Activated T-helper 1 cell treated with anti-CD3 and anti-CD28 coated beads, Interleukin-12 subunit alpha, Interleukin-12 subunit beta, Interleukin-2, Interleukin-4 antibody, amounts not matched to agents 30 ng/mL and 10 ng/mL and 1 ng/mL, durations not matched to agents 14 hours and 24 hours and 36 hours (primary cell): ENCODE measurements at regions of chr15 and their contacts with region 1.

Region 1: GRCh38 chr15:50222181-50222580 is 40.2 kb downstream of the SLC27A2 start:
- DNase-seq: no peak
- H3K4me3 Mint-ChIP-seq: no peak overlapping the region
- H3K27ac Mint-ChIP-seq: peak overlapping the region; percentile 41
- H3K4me1 Mint-ChIP-seq: peaks cover 11% of the 10 kb centered on the region
- H3K27me3 Mint-ChIP-seq: no peaks in the 10 kb centered on the region

Region 2: GRCh38 chr15:50205791-50206419 is 16.3 kb before region 1 on chr15:
- intact Hi-C with region 1: loop called (anchors 2 kb)
- DNase-seq: no peak
- H3K4me3 Mint-ChIP-seq: no peak overlapping the region
- H3K27ac Mint-ChIP-seq: no peak overlapping the region
- H3K4me1 Mint-ChIP-seq: peaks cover 14% of the 10 kb centered on the region
- H3K27me3 Mint-ChIP-seq: no peaks in the 10 kb centered on the region

Region 3: DNA sequence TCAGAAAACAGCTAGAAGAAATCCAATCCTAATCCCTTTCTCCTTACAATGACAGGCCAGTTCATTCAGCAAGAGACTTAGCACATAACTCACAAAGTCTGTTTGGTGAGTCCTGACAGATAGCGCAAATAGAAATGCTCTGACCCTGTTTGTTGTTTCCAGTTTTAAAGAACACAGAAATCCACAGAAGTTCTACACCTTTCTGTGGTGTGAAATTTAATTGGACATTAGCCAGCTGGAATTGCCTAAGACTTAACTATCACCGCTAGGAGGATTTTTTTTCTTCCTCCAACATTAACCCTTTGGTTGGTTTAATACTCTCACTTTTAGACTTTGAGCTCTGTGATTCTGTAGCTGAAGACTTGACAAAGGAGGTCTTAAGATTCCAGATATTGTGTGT is 12.6 kb after region 1 on chr15:
- intact Hi-C with region 1: no loop called
- DNase-seq: no peak
- H3K4me3 Mint-ChIP-seq: no peak overlapping the region
- H3K27ac Mint-ChIP-seq: no peak overlapping the region
- H3K4me1 Mint-ChIP-seq: peaks cover 6% of the 10 kb centered on the region
- H3K27me3 Mint-ChIP-seq: no peaks in the 10 kb centered on the region